CD8-positive, alpha-beta T cell (primary cell): ENCODE measurements at regions of chr6 and their contacts with region 1.

Region 1: GRCh38 chr6:79009819-79010218 is 68.2 kb downstream of the PHIP start:
- DNase-seq: no peak
- ATAC-seq: no peak
- H3K4me3 ChIP-seq: no peak overlapping the region
- H3K4me3 Mint-ChIP-seq: no peak overlapping the region
- H3K27ac ChIP-seq: no peak overlapping the region
- H3K27ac Mint-ChIP-seq: no peak overlapping the region
- H3K4me1 ChIP-seq: no peaks in the 10 kb centered on the region
- H3K4me1 Mint-ChIP-seq: peaks cover 8% of the 10 kb centered on the region
- H3K27me3 ChIP-seq: no peaks in the 10 kb centered on the region
- H3K27me3 Mint-ChIP-seq: no peaks in the 10 kb centered on the region
- CTCF ChIP-seq: no peak

Region 2: GRCh38 chr6:79064635-79065034 is 54.8 kb after region 1 on chr6:
- CTCF ChIA-PET with region 1: no interaction called
- POLR2A ChIA-PET with region 1: no interaction called
- intact Hi-C with region 1: loop called (anchors 2 to 5 kb)
- DNase-seq: no peak
- ATAC-seq: no peak
- H3K4me3 ChIP-seq: no peak overlapping the region
- H3K4me3 Mint-ChIP-seq: no peak overlapping the region
- H3K27ac ChIP-seq: no peak overlapping the region
- H3K27ac Mint-ChIP-seq: no peak overlapping the region
- H3K4me1 ChIP-seq: peaks cover 3% of the 10 kb centered on the region
- H3K4me1 Mint-ChIP-seq: peaks cover 28% of the 10 kb centered on the region
- H3K27me3 ChIP-seq: no peaks in the 10 kb centered on the region
- H3K27me3 Mint-ChIP-seq: no peaks in the 10 kb centered on the region
- CTCF ChIP-seq: no peak